Calu3 (cell line): ENCODE measurements at regions of chr5 and their contacts with region 1.

Region 1: GRCh38 chr5:74919487-74919886 is 53.3 kb upstream of the FAM169A start:
- DNase-seq: no peak
- H3K4me3 Mint-ChIP-seq: no peak overlapping the region
- H3K27ac Mint-ChIP-seq: no peak overlapping the region
- H3K4me1 Mint-ChIP-seq: peaks cover 26% of the 10 kb centered on the region
- H3K27me3 Mint-ChIP-seq: no peaks in the 10 kb centered on the region
- CTCF ChIP-seq: peak; percentile 72

Region 2: DNA sequence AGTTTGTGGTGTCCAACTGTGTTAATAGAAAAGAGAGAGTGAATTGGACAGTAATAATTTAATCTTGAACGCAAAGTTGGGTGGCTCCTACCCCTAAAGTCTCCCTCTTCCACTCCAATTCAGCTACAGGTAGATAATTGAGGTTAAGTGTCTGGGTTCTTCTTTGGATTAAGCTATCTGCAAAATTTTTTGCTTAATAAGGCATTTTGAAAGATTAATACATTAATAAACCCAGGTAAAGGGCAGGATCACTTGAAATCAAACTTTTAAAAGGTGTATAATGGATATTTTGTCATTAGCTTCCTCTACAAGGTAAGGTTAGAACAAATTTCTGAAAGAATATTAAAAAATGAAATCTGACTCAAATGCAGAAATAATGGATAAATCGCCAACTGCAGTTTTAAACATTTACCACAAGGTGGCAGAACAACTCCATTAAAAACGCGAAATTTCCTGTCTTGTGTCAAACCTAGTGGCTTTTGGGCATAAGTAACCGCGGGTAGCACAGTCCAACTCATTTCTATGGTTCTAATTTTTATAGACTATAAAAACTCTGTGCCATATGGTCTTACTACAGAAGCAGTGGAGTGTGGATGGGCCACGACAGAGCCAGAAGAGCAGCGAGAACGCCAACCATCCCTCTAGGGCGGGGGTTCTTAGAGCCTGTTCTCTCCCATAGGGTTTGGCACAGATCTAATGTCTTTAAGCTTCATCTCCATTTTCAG is 1017.0 kb before region 1 on chr5:
- CTCF ChIA-PET with region 1: no interaction called
- intact Hi-C with region 1: loop called (anchors 5 kb)
- DNase-seq: peak; percentile 19
- H3K4me3 Mint-ChIP-seq: no peak overlapping the region
- H3K27ac Mint-ChIP-seq: no peak overlapping the region
- H3K4me1 Mint-ChIP-seq: peaks cover 26% of the 10 kb centered on the region
- H3K27me3 Mint-ChIP-seq: no peaks in the 10 kb centered on the region
- CTCF ChIP-seq: peak; percentile 79

Region 3: DNA sequence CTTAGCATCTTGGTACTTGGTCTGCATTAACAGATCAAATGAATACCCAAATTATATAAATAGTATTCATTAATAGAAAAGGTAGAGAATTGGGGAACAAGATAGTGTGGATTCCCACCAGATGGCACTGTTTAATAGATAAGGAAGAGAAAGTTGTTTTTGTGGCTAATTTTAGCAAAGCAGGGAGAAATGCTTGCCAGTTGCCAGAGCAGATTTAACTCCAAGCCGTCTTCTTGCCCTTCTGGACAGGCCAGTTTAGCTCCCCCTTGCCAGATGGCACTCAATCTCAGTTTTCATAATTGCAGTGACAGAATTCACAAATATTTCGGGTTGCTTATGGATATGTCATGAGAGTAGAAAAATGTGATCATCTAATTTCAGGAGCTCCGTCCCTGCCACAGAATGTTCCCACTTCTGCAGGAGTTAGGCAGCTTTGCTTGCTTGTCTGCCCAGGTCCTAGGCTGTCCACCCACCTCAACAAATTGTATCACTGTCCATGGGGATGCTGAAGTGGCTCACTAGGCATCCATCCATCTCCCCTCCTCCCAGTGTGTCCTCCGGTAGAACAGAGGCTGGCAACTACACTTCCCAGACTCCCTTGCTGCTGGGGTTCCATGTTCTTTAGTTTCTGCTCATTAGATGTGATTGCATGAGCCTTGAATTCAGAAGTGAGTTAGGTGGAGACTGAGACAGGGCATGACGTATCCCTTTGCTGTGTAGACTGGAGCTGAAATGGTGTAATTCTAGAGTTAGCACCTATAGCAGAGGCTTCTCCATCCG is 246.3 kb before region 1 on chr5:
- CTCF ChIA-PET with region 1: no interaction called
- intact Hi-C with region 1: loop called (anchors 1 kb)
- DNase-seq: no peak
- H3K4me3 Mint-ChIP-seq: no peak overlapping the region
- H3K27ac Mint-ChIP-seq: no peak overlapping the region
- H3K4me1 Mint-ChIP-seq: no peaks in the 10 kb centered on the region
- H3K27me3 Mint-ChIP-seq: no peaks in the 10 kb centered on the region
- CTCF ChIP-seq: peak; percentile 47

Region 4: GRCh38 chr5:74766849-74767578 is 152.5 kb before region 1 on chr5 and contains the starts of genes GFM2 and NSA2:
- CTCF ChIA-PET with region 1: interaction called, 3 read pairs
- intact Hi-C with region 1: loop called (anchors 1 kb)
- DNase-seq: peak; percentile 94
- H3K4me3 Mint-ChIP-seq: peak within 1 kb of the TSS; percentile 99
- H3K27ac Mint-ChIP-seq: peak within 1 kb of the TSS; percentile 98
- H3K4me1 Mint-ChIP-seq: peaks cover 19% of the 10 kb centered on the region
- H3K27me3 Mint-ChIP-seq: no peaks in the 10 kb centered on the region
- CTCF ChIP-seq: no peak
- total RNA-seq, gene GFM2: 51.2 and 57.1 TPM in 2 replicates
- total RNA-seq, gene NSA2: 171 and 203 TPM in 2 replicates